CD4-positive, alpha-beta T cell (primary cell): ENCODE measurements at regions of chr17 and their contacts with region 1.

Region 1: GRCh38 chr17:43125133-43125966 is at the start of gene BRCA1:
- DNase-seq: peak; percentile 86 to 99 (median 90)
- ATAC-seq: peak; percentile 99
- H3K4me3 ChIP-seq: peak within 1 kb of the TSS; percentile 77
- H3K4me3 Mint-ChIP-seq: peak within 1 kb of the TSS; percentile 86
- H3K27ac ChIP-seq: peak within 1 kb of the TSS; percentile 55 to 83
- H3K27ac Mint-ChIP-seq: peak within 1 kb of the TSS; percentile 71
- H3K4me1 ChIP-seq: peaks cover 18% of the 10 kb centered on the region
- H3K4me1 Mint-ChIP-seq: peaks cover 23% of the 10 kb centered on the region
- H3K27me3 ChIP-seq: no peaks in the 10 kb centered on the region
- H3K27me3 Mint-ChIP-seq: no peaks in the 10 kb centered on the region
- CTCF ChIP-seq: no peak
- total RNA-seq, gene BRCA1: 1.2 to 1.3 TPM

Region 2: DNA sequence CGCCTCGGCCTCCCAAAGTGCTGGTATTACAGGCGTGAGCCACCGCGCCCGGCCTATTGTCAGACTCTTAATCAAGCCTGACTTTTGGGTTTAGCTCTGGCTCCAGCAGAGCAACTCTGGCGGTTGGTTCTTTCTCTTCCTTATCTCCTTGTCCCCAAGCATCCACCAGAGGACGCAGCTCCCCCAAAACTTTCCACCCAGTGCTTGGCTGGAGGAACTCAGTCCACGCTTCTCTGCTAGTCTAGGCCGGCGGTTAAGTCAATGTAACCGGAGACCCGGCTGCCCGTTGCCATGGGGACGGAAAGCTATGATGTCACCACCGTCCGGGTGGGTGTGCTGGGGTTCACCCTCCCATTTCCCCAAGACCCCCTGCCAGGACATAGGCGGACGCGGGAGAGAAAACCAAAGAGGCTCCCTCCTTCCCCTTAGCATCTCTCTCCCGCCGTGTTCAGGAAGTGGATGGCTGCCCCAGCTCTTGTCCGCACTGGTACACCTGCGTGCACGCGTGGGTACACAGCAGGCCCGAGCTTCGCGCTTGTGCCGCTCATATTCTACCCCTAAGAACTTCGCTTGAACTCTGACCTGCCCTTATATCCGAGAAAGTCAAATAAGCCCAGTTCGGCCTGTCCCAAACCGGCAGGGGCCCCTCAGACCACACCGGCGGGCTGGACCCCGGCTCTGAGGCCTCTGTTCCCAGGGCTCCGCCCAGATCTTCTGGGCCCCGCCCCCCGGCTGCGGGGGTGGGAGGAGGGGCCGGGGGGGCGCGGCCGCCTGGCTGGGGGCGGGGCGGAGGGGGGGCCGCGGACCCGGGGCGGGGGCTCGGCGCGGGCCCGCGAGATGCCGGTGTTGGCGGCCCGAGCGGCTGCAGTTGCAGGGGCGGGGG is 100.7 kb before region 1 on chr17 and contains the start of gene RND2:
- CTCF ChIA-PET with region 1: no interaction called
- POLR2A ChIA-PET with region 1: interaction called, 7 read pairs
- intact Hi-C with region 1: loop called (anchors 5 to 10 kb)
- DNase-seq: peak; percentile 60 to 91 (median 71)
- ATAC-seq: peak; percentile 56
- H3K4me3 ChIP-seq: peak within 1 kb of the TSS; percentile 74
- H3K4me3 Mint-ChIP-seq: peak within 1 kb of the TSS; percentile 90
- H3K27ac ChIP-seq: peak within 1 kb of the TSS in 1 of 2 donors; percentile 56
- H3K27ac Mint-ChIP-seq: peak within 1 kb of the TSS; percentile 77
- H3K4me1 ChIP-seq: peaks cover 48% of the 10 kb centered on the region
- H3K4me1 Mint-ChIP-seq: peaks cover 28% of the 10 kb centered on the region
- H3K27me3 ChIP-seq: no peaks in the 10 kb centered on the region
- H3K27me3 Mint-ChIP-seq: no peaks in the 10 kb centered on the region
- CTCF ChIP-seq: peak; percentile 21
- total RNA-seq, gene RND2: 0.27 to 0.28 TPM

Region 3: GRCh38 chr17:43140396-43141332 is 15.3 kb after region 1 on chr17:
- CTCF ChIA-PET with region 1: no interaction called
- POLR2A ChIA-PET with region 1: no interaction called
- intact Hi-C with region 1: no loop called
- DNase-seq: no peak
- ATAC-seq: no peak
- H3K4me3 ChIP-seq: no peak overlapping the region
- H3K4me3 Mint-ChIP-seq: no peak overlapping the region
- H3K27ac ChIP-seq: no peak overlapping the region
- H3K27ac Mint-ChIP-seq: no peak overlapping the region
- H3K4me1 ChIP-seq: no peaks in the 10 kb centered on the region
- H3K4me1 Mint-ChIP-seq: peaks cover 5% of the 10 kb centered on the region
- H3K27me3 ChIP-seq: no peaks in the 10 kb centered on the region
- H3K27me3 Mint-ChIP-seq: no peaks in the 10 kb centered on the region
- CTCF ChIP-seq: no peak

Region 4: GRCh38 chr17:43170766-43171585 is 45.6 kb after region 1 on chr17 and contains the start of gene NBR1:
- CTCF ChIA-PET with region 1: no interaction called
- POLR2A ChIA-PET with region 1: interaction called, 11 read pairs
- intact Hi-C with region 1: loop called (anchors 1 kb)
- DNase-seq: peak; percentile 90 to 99 (median 92)
- ATAC-seq: peak; percentile 76
- H3K4me3 ChIP-seq: peak within 1 kb of the TSS; percentile 71
- H3K4me3 Mint-ChIP-seq: no peak within 1 kb of the TSS
- H3K27ac ChIP-seq: peak within 1 kb of the TSS; percentile 98
- H3K27ac Mint-ChIP-seq: no peak within 1 kb of the TSS
- H3K4me1 ChIP-seq: peaks cover 47% of the 10 kb centered on the region
- H3K4me1 Mint-ChIP-seq: peaks cover 27% of the 10 kb centered on the region
- H3K27me3 ChIP-seq: no peaks in the 10 kb centered on the region
- H3K27me3 Mint-ChIP-seq: no peaks in the 10 kb centered on the region
- CTCF ChIP-seq: no peak
- total RNA-seq, gene NBR1: 23.7 TPM

Region 5: DNA sequence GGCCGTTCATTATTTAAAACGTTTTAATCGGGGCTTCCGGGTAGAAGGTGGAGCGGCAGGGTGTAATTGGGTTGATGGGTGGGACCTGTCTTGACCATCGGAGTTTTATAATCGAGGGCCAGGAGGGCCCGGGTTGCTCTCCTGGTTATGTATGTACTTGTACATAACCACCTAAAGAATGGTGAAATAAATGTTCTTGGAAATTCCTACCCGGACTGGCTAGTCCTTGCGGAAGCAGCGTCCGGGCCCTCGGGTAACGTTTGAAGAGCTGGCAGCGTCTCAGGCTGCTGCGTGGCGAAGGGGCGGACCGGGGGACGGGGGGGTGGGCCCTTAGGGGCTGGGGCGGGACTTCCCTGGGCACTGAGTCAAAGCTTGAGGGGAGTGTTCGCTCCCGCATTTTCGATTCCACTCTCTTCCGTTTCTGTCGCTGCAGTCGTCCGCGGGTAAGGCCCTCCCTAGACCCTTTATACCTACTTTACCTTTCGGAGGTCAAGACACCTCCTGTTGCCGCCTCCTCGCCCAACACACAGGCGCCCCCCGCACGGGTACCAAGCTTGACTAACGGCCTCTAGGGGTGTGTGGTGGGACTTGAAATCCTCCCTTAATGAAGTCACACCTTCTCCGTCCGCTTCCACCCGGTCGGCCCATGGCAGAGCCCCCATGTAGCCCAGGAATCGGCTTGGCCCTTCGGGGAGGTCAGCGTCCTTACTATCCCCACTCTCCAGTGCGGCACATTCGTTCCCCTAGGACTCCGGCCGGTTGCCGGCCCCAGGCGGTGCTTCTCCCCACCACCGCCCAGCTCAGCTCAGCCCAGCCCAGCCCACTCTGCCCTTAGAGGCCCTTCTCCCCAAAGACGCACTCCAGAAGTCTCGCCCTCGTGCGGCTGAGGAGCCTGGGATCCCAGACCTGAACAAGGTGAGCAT is 86.4 kb after region 1 on chr17 and contains the start of gene TMEM106A:
- CTCF ChIA-PET with region 1: no interaction called
- POLR2A ChIA-PET with region 1: no interaction called
- intact Hi-C with region 1: loop called in 1 of 2 experiments (anchors 5 kb)
- DNase-seq: peak; percentile 56 to 88 (median 68)
- ATAC-seq: peak; percentile 90
- H3K4me3 ChIP-seq: peak within 1 kb of the TSS; percentile 69
- H3K4me3 Mint-ChIP-seq: peak within 1 kb of the TSS; percentile 98
- H3K27ac ChIP-seq: peak within 1 kb of the TSS; percentile 72 to 77
- H3K27ac Mint-ChIP-seq: peak within 1 kb of the TSS; percentile 89
- H3K4me1 ChIP-seq: peaks cover 22% of the 10 kb centered on the region
- H3K4me1 Mint-ChIP-seq: peaks cover 38% of the 10 kb centered on the region
- H3K27me3 ChIP-seq: no peaks in the 10 kb centered on the region
- H3K27me3 Mint-ChIP-seq: no peaks in the 10 kb centered on the region
- CTCF ChIP-seq: peak; percentile 61
- total RNA-seq, gene TMEM106A: 6.3 to 6.4 TPM

Region 6: GRCh38 chr17:43330876-43331639 is 205.7 kb after region 1 on chr17:
- CTCF ChIA-PET with region 1: no interaction called
- POLR2A ChIA-PET with region 1: no interaction called
- intact Hi-C with region 1: loop called (anchors 5 to 10 kb)
- DNase-seq: no peak
- ATAC-seq: no peak
- H3K4me3 ChIP-seq: no peak overlapping the region
- H3K4me3 Mint-ChIP-seq: no peak overlapping the region
- H3K27ac ChIP-seq: no peak overlapping the region
- H3K27ac Mint-ChIP-seq: no peak overlapping the region
- H3K4me1 ChIP-seq: peaks cover 8% of the 10 kb centered on the region
- H3K4me1 Mint-ChIP-seq: peaks cover 7% of the 10 kb centered on the region
- H3K27me3 ChIP-seq: peaks cover 0 to 5% of the 10 kb centered on the region in 2 experiments
- H3K27me3 Mint-ChIP-seq: peaks cover 18% of the 10 kb centered on the region
- CTCF ChIP-seq: no peak

Region 7: GRCh38 chr17:43338886-43339516 is 213.7 kb after region 1 on chr17:
- CTCF ChIA-PET with region 1: no interaction called
- POLR2A ChIA-PET with region 1: no interaction called
- intact Hi-C with region 1: loop called in 1 of 2 experiments (anchors 10 kb)
- DNase-seq: peak; percentile 48 to 75 (median 58)
- ATAC-seq: no peak
- H3K4me3 ChIP-seq: no peak overlapping the region
- H3K4me3 Mint-ChIP-seq: no peak overlapping the region
- H3K27ac ChIP-seq: no peak overlapping the region
- H3K27ac Mint-ChIP-seq: no peak overlapping the region
- H3K4me1 ChIP-seq: peaks cover 8% of the 10 kb centered on the region
- H3K4me1 Mint-ChIP-seq: peaks cover 8% of the 10 kb centered on the region
- H3K27me3 ChIP-seq: no peaks in the 10 kb centered on the region
- H3K27me3 Mint-ChIP-seq: no peaks in the 10 kb centered on the region
- CTCF ChIP-seq: peak; percentile 79

Region 8: GRCh38 chr17:43388359-43389045 is 263.2 kb after region 1 on chr17:
- CTCF ChIA-PET with region 1: interaction called, 3 read pairs
- POLR2A ChIA-PET with region 1: interaction called, 4 read pairs
- intact Hi-C with region 1: loop called in 1 of 2 experiments (anchors 5 kb)
- DNase-seq: peak; percentile 84 to 95 (median 90)
- ATAC-seq: peak; percentile 70
- H3K4me3 ChIP-seq: peak overlapping the region; percentile 71
- H3K4me3 Mint-ChIP-seq: peak overlapping the region; percentile 93
- H3K27ac ChIP-seq: peak overlapping the region; percentile 94 to 97
- H3K27ac Mint-ChIP-seq: peak overlapping the region; percentile 97
- H3K4me1 ChIP-seq: peaks cover 27% of the 10 kb centered on the region
- H3K4me1 Mint-ChIP-seq: peaks cover 36% of the 10 kb centered on the region
- H3K27me3 ChIP-seq: no peaks in the 10 kb centered on the region
- H3K27me3 Mint-ChIP-seq: no peaks in the 10 kb centered on the region
- CTCF ChIP-seq: no peak

Region 9: DNA sequence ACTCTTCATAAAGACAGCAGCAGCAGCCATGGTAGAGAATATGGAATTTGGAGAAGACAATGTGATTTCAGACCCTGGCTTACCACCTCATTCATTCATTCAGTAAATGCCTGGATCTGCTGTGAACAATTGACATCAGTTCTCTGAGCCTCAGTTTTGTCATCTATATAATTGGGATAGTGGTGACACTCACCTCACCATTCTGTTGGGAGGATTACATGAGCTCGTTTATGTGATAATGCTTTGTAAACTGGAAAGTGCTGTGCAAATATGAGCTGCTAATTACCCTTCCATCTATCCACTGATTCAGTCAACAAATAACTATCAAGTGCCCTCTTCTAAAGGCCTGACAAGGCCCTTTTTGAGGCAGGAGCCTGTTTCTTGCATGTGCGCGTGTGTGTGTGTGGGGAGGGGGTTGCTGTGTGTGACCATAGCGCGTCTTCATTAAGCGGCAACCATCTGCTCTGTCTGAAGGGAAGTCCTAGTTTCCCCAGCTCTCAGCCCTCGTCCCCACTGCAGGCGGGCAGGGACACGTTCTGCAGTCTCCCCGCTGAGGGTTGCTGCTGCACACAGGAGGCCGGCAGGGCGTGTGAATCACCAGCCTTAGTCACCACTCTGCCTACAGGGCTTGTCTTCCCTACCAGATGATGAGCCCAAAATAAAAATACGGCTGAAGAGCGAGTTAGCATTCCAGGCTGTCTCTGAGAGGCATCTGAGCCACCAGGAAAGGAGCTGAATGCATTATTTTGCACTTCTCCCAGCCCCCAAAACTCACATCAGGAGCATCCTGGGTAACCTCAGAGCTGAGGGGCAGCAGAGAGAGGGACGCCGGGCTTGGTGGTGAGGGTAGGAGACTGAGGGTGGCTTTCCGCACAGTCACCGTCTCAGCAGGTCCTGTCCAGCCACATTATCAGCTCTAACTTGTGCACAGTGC is 293.4 kb after region 1 on chr17:
- CTCF ChIA-PET with region 1: no interaction called
- POLR2A ChIA-PET with region 1: no interaction called
- intact Hi-C with region 1: no loop called
- DNase-seq: no peak
- ATAC-seq: no peak
- H3K4me3 ChIP-seq: no peak overlapping the region
- H3K4me3 Mint-ChIP-seq: no peak overlapping the region
- H3K27ac ChIP-seq: no peak overlapping the region
- H3K27ac Mint-ChIP-seq: no peak overlapping the region
- H3K4me1 ChIP-seq: no peaks in the 10 kb centered on the region
- H3K4me1 Mint-ChIP-seq: no peaks in the 10 kb centered on the region
- H3K27me3 ChIP-seq: peaks cover 2 to 6% of the 10 kb centered on the region in 2 experiments
- H3K27me3 Mint-ChIP-seq: peaks cover 49% of the 10 kb centered on the region
- CTCF ChIP-seq: no peak